Activated T-helper 1 cell treated with anti-CD3 and anti-CD28 coated beads, Interleukin-12 subunit alpha, Interleukin-12 subunit beta, Interleukin-2, Interleukin-4 antibody, amounts not matched to agents 30 ng/mL and 10 ng/mL and 1 ng/mL, durations not matched to agents 14 hours and 24 hours and 36 hours (primary cell): ENCODE measurements at regions of chr17 and their contacts with region 1.

Region 1: DNA sequence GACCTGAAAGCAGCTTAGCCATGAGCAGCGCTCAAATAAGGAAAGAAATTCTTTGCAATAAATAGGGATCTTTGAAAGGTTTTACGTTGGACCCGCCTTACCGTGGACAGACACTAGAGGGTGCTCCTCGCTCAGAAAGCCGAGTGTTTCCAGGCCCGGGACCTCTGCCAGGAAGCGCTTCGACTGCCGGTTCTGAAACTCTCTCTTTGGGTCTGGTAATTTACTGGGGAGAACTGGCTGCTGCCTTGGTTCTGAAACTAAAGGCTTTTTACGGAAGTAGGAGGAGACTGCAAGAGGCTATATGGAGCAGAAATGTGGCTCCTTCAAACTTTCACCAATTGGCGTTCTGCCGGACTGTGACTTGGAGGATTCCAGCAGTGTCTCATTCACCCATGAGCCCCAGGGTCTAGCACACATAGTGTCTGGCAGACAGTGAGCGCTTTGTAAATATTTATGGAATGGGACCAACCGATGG is 45.6 kb upstream of the HOXB9 start:
- DNase-seq: peak; percentile 46
- H3K4me3 Mint-ChIP-seq: peak overlapping the region; percentile 20
- H3K27ac Mint-ChIP-seq: no peak overlapping the region
- H3K4me1 Mint-ChIP-seq: peaks cover 6% of the 10 kb centered on the region
- H3K27me3 Mint-ChIP-seq: peaks cover 39% of the 10 kb centered on the region

Region 2: DNA sequence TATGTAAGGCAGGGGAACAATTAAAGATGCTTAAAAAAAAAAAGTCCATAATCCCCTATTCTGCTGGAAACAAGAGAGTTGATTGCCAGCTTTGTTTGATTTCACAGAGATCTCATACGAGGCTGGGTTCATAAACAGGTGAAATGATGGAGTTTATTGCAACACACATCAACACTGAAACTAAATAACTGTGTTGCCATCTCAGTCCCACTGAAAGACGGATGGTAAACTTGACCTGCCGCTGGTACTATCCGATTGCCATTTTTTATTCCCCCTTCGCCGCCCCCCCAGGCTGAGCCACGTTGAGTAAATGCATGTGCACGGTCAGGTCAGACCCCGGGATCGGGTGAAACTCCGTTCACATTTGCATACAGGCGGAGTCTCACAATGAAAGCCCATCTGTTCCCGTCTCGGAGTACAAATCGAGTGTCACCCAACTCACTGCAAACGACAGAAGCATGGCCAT is 361.0 kb before region 1 on chr17:
- intact Hi-C with region 1: no loop called
- DNase-seq: no peak
- H3K4me3 Mint-ChIP-seq: no peak overlapping the region
- H3K27ac Mint-ChIP-seq: no peak overlapping the region
- H3K4me1 Mint-ChIP-seq: peaks cover 6% of the 10 kb centered on the region
- H3K27me3 Mint-ChIP-seq: no peaks in the 10 kb centered on the region

Region 3: DNA sequence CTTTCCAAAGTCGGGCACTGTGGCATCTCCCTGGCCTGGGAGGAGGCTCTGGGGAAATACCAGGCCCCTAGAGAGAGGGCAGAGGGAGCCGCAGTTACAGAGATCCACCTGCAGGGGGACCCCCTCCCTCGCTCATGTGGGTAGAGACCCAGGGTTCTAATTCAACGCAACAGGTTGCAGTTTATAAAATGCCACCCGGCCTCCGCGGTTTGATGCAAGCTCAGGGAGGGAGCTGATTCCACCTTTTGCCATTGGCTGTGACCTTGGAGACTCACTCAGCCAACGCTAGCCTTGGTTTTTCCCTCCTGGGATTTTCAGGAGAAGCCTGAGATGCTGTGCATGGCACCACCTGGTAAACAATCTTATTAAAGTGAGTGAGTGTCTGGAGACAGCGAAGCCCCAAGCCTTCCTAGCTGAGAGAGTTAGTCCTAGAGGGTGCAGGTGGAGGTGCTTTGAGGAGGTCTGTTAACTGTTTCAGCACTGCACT is 133.2 kb after region 1 on chr17:
- intact Hi-C with region 1: loop called (anchors 5 kb)
- DNase-seq: peak; percentile 54
- H3K4me3 Mint-ChIP-seq: no peak overlapping the region
- H3K27ac Mint-ChIP-seq: no peak overlapping the region
- H3K4me1 Mint-ChIP-seq: no peaks in the 10 kb centered on the region
- H3K27me3 Mint-ChIP-seq: peaks cover 27% of the 10 kb centered on the region